CD8-positive, alpha-beta T cell (primary cell): ENCODE measurements at regions of chr6 and their contacts with region 1.

Region 1: GRCh38 chr6:44925100-44925739 is 402.9 kb upstream of the RUNX2 start:
- DNase-seq: peak in 5 of 9 experiments; percentile 27 to 93 (median 63)
- ATAC-seq: peak; percentile 87
- H3K4me3 ChIP-seq: peak overlapping the region in 1 of 2 experiments; percentile 18
- H3K4me3 Mint-ChIP-seq: peak overlapping the region; percentile 26
- H3K27ac ChIP-seq: peak overlapping the region; percentile 63 to 67
- H3K27ac Mint-ChIP-seq: peak overlapping the region; percentile 81
- H3K4me1 ChIP-seq: peaks cover 56% of the 10 kb centered on the region
- H3K4me1 Mint-ChIP-seq: peaks cover 59% of the 10 kb centered on the region
- H3K27me3 ChIP-seq: no peaks in the 10 kb centered on the region
- H3K27me3 Mint-ChIP-seq: no peaks in the 10 kb centered on the region
- CTCF ChIP-seq: no peak

Region 2: DNA sequence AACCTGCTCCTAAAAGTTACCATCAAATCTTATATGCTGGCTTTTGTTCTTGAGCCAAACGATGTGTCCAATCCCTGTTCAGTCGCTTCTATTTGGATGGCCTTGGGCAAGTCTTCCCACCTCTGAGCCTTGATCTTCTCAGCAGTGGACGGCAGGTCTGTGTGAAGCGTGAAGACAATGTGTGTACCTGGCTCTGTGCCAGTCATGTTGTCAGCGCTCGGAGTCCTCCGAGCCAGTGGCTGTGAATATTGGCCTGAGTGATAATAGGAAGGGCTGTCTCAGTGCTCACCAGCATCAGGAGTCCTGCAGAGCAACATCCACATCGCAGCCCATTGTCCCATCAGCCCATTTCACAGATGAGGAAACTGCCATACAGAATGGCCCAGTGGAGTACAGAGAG is 318.7 kb before region 1 on chr6:
- CTCF ChIA-PET with region 1: no interaction called
- POLR2A ChIA-PET with region 1: no interaction called
- intact Hi-C with region 1: no loop called
- DNase-seq: no peak
- ATAC-seq: no peak
- H3K4me3 ChIP-seq: no peak overlapping the region
- H3K4me3 Mint-ChIP-seq: no peak overlapping the region
- H3K27ac ChIP-seq: no peak overlapping the region
- H3K27ac Mint-ChIP-seq: no peak overlapping the region
- H3K4me1 ChIP-seq: no peaks in the 10 kb centered on the region
- H3K4me1 Mint-ChIP-seq: no peaks in the 10 kb centered on the region
- H3K27me3 ChIP-seq: no peaks in the 10 kb centered on the region
- H3K27me3 Mint-ChIP-seq: no peaks in the 10 kb centered on the region
- CTCF ChIP-seq: no peak

Region 3: GRCh38 chr6:44956396-44956795 is 31.2 kb after region 1 on chr6:
- CTCF ChIA-PET with region 1: no interaction called
- POLR2A ChIA-PET with region 1: no interaction called
- intact Hi-C with region 1: no loop called
- DNase-seq: no peak
- ATAC-seq: no peak
- H3K4me3 ChIP-seq: no peak overlapping the region
- H3K4me3 Mint-ChIP-seq: no peak overlapping the region
- H3K27ac ChIP-seq: no peak overlapping the region
- H3K27ac Mint-ChIP-seq: no peak overlapping the region
- H3K4me1 ChIP-seq: peaks cover 5% of the 10 kb centered on the region
- H3K4me1 Mint-ChIP-seq: peaks cover 6% of the 10 kb centered on the region
- H3K27me3 ChIP-seq: no peaks in the 10 kb centered on the region
- H3K27me3 Mint-ChIP-seq: no peaks in the 10 kb centered on the region
- CTCF ChIP-seq: no peak

Region 4: GRCh38 chr6:44976719-44977641 is 51.8 kb after region 1 on chr6:
- CTCF ChIA-PET with region 1: interaction called, 3 read pairs
- POLR2A ChIA-PET with region 1: no interaction called
- intact Hi-C with region 1: loop called in 1 of 2 experiments (anchors 2 kb)
- DNase-seq: peak in 3 of 9 experiments; percentile 38 to 68 (median 58)
- ATAC-seq: peak; percentile 84
- H3K4me3 ChIP-seq: no peak overlapping the region
- H3K4me3 Mint-ChIP-seq: peak overlapping the region; percentile 60
- H3K27ac ChIP-seq: peak overlapping the region; percentile 4 to 24
- H3K27ac Mint-ChIP-seq: peak overlapping the region; percentile 85
- H3K4me1 ChIP-seq: peaks cover 39% of the 10 kb centered on the region
- H3K4me1 Mint-ChIP-seq: peaks cover 51% of the 10 kb centered on the region
- H3K27me3 ChIP-seq: no peaks in the 10 kb centered on the region
- H3K27me3 Mint-ChIP-seq: no peaks in the 10 kb centered on the region
- CTCF ChIP-seq: no peak

Region 5: GRCh38 chr6:45009576-45009975 is 84.4 kb after region 1 on chr6:
- CTCF ChIA-PET with region 1: no interaction called
- POLR2A ChIA-PET with region 1: no interaction called
- intact Hi-C with region 1: loop called in 1 of 2 experiments (anchors 5 kb)
- DNase-seq: no peak
- ATAC-seq: no peak
- H3K4me3 ChIP-seq: no peak overlapping the region
- H3K4me3 Mint-ChIP-seq: no peak overlapping the region
- H3K27ac ChIP-seq: no peak overlapping the region
- H3K27ac Mint-ChIP-seq: no peak overlapping the region
- H3K4me1 ChIP-seq: no peaks in the 10 kb centered on the region
- H3K4me1 Mint-ChIP-seq: no peaks in the 10 kb centered on the region
- H3K27me3 ChIP-seq: no peaks in the 10 kb centered on the region
- H3K27me3 Mint-ChIP-seq: no peaks in the 10 kb centered on the region
- CTCF ChIP-seq: no peak